ENCODE measurements at regions of chr11 and their contacts with region 1.

Region 1: DNA sequence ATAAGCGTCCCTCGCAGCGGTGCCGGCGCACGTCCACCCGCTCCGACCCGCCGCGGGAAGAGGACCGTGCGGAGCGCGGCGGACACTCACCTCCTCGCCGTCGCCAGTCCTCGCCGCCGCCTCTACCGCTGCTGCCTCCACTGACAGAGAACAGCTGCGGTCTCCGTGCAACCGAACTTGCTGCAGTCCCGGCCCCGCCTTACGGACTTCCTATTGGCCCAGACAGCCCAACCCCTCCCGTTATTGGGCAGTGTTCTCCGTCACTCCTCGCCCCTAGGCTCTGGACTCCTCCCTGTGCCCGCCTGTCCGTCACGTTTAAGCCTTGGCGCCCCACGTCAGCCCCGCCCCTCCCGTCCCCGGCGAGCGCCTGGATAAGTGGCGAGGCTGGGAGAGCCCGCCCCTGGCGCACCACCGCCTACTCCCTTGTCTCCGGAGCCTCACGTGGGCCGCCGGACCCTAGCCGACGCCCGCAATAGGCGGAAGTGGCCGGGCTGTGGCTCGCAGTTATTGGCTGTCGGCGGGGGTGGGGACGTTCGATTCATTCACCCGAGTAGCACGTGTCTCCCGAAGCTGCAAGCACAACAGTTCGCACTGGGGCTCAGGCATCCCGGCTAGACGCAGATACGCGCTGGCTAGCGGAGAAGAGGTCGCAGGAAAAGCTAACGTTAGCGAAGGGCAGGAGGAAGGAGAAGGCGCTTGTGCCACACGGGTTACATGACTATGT is at the start of gene PC:
- DNase-seq: peak; percentile 98 to 100 (median 100)

Region 2: DNA sequence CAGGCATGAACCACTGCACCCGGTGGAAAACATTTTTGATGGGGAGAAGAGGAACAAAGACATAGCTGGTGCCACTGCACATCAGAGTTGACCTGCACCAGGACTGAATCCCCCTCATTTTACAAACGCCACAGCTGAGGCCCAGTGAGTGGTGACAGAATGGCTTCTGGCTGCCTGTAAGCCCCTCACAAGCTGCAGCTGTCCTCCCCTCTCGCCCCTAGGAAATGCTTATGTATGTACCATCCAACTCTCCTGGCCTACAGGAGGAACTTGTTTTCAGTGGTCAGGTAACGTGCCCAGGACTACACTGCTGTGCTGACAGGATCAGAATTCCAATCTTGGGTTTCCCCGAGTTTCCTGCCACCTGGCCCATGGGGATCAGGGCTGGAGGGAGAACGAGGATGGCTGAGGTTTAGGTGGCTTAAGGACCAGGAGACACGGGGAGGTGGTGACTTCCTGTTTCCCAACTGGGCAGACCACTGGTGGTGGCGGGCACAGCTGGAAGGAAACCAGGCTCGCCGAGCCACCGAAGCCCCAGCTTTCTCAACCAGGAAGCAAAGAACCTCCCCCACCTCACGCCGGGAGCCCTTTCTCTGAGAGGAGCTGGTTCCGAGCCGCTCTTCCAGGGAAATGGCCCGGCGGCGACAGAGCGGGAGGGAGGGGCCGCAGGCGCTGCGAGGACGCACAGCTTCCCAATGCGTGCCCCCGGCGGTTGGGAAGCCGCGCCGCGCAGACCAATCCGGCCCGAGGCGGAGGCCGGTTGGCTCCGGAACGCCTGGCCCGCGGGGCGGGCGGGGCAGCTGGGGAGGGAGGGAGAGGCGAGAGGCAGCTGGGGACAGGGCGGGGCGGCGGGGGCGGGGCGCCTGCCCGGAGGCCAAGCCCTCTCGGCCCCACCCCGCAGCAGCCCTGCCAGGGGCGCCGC is 102.6 kb before region 1 on chr11:
- intact Hi-C with region 1: loop called (anchors 5 kb)
- DNase-seq: peak; percentile 72 to 96 (median 92)

Region 3: DNA sequence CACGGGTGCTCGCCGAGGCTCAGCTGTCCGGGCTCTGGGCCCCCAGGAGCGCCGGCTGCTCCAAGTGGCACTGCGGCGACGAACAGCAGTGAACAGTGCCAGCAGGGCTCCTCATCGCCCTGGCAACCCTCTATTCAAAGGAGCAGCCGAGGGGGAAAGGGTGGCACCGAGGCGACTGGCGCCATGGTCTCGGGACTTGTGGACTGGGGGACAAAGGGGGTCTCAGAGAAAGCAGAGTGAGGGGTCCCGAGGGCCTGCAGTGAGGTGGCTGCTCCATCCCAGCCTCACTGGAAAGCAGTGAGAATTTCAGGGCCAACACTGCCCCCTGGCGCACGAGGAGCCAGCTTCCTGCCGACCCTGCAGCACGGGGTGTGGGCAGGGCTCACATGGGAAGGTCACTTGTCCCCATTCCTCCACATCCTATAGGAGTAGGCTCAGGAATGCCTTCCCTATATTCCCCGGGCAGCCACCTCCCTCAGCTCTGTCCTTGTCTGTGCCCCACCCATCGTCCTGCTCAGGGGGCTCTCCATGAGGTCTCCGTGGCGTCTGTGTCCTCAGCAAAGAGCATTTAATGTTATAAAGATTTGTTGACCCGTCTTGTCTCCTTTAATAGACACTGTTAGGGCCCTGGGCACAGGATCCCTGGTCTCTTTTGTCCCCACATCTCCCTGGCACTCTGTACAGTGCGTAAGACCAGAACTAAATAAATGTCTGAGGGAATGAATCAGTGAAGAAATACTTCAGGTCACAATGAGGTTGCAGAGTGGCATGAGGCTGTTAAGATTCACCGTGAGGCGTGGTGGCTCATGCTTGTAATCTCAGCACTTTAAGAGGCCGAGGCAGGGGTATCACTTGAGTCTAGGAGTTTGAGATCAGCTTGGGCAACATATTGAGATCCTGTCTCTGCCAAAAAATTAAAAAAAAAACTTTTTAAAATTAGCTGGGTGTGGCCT is 75.1 kb before region 1 on chr11:
- intact Hi-C with region 1: loop called (anchors 1 kb)
- DNase-seq: peak; percentile 54 to 94 (median 87)